Left ventricle myocardium superior (tissue), 1 donor: ENCODE measurements at regions of chr15 and their contacts with region 1.

Region 1: DNA sequence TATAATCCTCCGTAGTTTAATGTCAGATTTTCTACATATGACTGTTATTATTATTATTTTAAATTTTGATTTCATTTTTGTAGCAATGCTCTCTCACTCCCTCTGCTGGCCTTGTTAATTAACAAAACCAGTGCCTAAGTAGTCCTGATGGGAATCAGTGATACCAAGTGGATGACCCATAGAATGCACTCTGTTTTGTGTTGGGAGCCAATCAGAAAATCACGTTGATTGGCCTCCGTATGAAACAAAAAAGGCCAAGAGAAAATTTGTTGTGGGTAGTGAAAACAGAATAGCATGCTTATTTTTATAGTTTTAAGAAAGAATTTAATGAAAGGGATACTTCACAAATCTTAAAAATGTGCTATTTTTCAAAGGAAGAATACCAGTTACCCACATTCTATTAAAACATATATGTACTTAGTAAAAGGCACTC is 34.4 kb upstream of the MEIS2 start:
- DNase-seq: no peak
- ATAC-seq: peak; percentile 69

Region 2: GRCh38 chr15:36501063-36501678 is 633.5 kb before region 1 on chr15:
- intact Hi-C with region 1: loop called (anchors 5 kb)
- DNase-seq: no peak
- ATAC-seq: peak; percentile 97